Activated CD4-positive, alpha-beta T cell treated with anti-CD3 and anti-CD28 coated beads for 36 hours (primary cell): ENCODE measurements at regions of chr18 and their contacts with region 1.

Region 1: GRCh38 chr18:21489119-21489750 is 111.3 kb downstream of the ESCO1 start:
- DNase-seq: peak; percentile 61
- ATAC-seq: peak; percentile 55
- H3K4me3 Mint-ChIP-seq: no peak overlapping the region
- H3K27ac Mint-ChIP-seq: no peak overlapping the region
- H3K4me1 Mint-ChIP-seq: no peaks in the 10 kb centered on the region
- H3K27me3 Mint-ChIP-seq: peaks cover 5% of the 10 kb centered on the region

Region 2: DNA sequence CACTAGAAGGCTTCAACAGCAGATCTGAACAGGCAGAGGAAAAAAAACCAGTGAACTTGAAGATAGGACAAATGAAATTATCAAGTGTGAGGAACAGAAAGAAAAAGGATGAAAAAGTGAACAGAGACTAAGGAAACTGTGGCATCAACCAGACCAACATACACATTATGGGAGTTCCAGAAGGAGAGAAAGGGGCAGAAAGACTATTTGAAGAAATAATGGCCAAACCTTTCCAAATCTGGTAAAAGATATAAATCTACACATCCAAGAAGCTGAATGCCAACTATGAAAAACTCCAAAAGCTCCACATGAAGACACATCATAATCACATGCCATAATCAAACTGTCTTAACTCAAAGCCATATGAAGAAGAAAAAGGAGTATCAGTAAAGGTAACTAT is 457.4 kb before region 1 on chr18:
- CTCF ChIA-PET with region 1: no interaction called
- POLR2A ChIA-PET with region 1: no interaction called
- intact Hi-C with region 1: no loop called
- DNase-seq: no peak
- ATAC-seq: no peak
- H3K4me3 Mint-ChIP-seq: no peak overlapping the region
- H3K27ac Mint-ChIP-seq: no peak overlapping the region
- H3K4me1 Mint-ChIP-seq: peaks cover 2% of the 10 kb centered on the region
- H3K27me3 Mint-ChIP-seq: no peaks in the 10 kb centered on the region

Region 3: GRCh38 chr18:21629089-21629832 is 140.0 kb after region 1 on chr18:
- CTCF ChIA-PET with region 1: no interaction called
- POLR2A ChIA-PET with region 1: no interaction called
- intact Hi-C with region 1: no loop called
- DNase-seq: no peak
- ATAC-seq: no peak
- H3K4me3 Mint-ChIP-seq: no peak overlapping the region
- H3K27ac Mint-ChIP-seq: peak overlapping the region; percentile 84
- H3K4me1 Mint-ChIP-seq: peaks cover 11% of the 10 kb centered on the region
- H3K27me3 Mint-ChIP-seq: no peaks in the 10 kb centered on the region

Region 4: GRCh38 chr18:21851327-21851972 is 362.2 kb after region 1 on chr18:
- CTCF ChIA-PET with region 1: interaction called, 3 read pairs
- POLR2A ChIA-PET with region 1: no interaction called
- intact Hi-C with region 1: loop called (anchors 2 to 10 kb)
- DNase-seq: no peak
- ATAC-seq: no peak
- H3K4me3 Mint-ChIP-seq: no peak overlapping the region
- H3K27ac Mint-ChIP-seq: no peak overlapping the region
- H3K4me1 Mint-ChIP-seq: peaks cover 7% of the 10 kb centered on the region
- H3K27me3 Mint-ChIP-seq: no peaks in the 10 kb centered on the region

Region 5: DNA sequence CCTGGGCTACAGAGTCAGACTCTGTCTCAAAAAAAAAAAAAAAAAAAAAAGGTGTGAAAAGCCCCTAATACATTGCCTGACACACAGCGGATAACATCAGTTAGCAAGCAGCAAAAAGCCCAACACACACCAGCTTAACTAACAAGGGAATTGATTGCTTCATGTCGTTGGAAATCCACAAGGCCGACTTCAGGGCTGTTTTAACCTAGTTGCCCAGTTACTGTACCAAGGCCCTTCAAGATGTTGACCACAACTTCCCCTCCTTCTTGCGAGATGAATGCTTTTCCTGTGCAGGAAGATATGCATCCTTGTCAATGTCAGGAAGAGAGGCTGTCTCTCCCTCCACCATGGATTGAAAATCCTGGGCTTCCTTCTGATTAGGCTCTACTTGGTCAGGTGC is 454.2 kb after region 1 on chr18:
- CTCF ChIA-PET with region 1: no interaction called
- POLR2A ChIA-PET with region 1: no interaction called
- intact Hi-C with region 1: loop called in 1 of 2 experiments (anchors 10 kb)
- DNase-seq: no peak
- ATAC-seq: no peak
- H3K4me3 Mint-ChIP-seq: no peak overlapping the region
- H3K27ac Mint-ChIP-seq: no peak overlapping the region
- H3K4me1 Mint-ChIP-seq: no peaks in the 10 kb centered on the region
- H3K27me3 Mint-ChIP-seq: peaks cover 13% of the 10 kb centered on the region